Activated CD4-positive, alpha-beta T cell treated with anti-CD3 and anti-CD28 coated beads for 36 hours (primary cell): ENCODE measurements at regions of chr3 and their contacts with region 1.

Region 1: DNA sequence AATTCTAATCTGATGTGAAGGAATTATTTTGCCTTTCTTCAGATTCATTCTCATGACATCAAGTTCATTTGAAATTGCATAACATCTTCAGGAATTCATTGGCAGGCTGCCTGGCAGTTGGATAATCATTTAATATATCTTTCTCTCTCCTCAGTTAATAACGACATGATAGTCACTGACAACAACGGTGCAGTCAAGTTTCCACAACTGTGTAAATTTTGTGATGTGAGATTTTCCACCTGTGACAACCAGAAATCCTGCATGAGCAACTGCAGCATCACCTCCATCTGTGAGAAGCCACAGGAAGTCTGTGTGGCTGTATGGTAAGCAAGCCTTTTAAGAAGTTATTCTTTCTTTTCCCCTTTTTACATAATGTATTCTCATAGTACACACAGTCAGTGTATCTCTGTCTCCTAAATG is 38.2 kb downstream of the TGFBR2 start:
- DNase-seq: peak; percentile 74
- ATAC-seq: peak; percentile 62
- H3K4me3 Mint-ChIP-seq: peak overlapping the region; percentile 58
- H3K27ac Mint-ChIP-seq: peak overlapping the region; percentile 94
- H3K4me1 Mint-ChIP-seq: peaks cover 94% of the 10 kb centered on the region
- H3K27me3 Mint-ChIP-seq: no peaks in the 10 kb centered on the region

Region 2: DNA sequence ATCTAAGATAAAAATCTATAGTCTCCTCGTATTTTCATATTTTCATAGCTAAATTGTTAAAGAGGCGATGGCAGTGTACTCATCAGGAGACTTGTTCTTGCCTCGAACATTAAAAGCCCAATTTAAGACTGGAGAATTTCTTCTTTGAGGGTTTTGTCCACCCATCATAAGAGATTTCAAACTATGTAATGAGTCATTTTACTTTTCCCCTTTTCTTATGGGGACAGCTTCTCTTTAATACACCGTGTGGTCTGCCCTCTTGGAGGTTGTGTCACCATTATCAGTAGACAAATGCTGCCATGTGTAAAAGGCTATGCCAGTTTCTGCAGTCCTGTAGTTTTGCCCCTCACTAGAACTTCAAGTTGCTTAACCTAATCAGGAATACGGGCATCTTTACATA is 21.3 kb before region 1 on chr3:
- CTCF ChIA-PET with region 1: interaction called, 8 read pairs
- POLR2A ChIA-PET with region 1: no interaction called
- intact Hi-C with region 1: loop called (anchors 1 kb)
- DNase-seq: no peak
- ATAC-seq: peak; percentile 20
- H3K4me3 Mint-ChIP-seq: peak overlapping the region; percentile 17
- H3K27ac Mint-ChIP-seq: peak overlapping the region; percentile 83
- H3K4me1 Mint-ChIP-seq: peaks cover 96% of the 10 kb centered on the region
- H3K27me3 Mint-ChIP-seq: no peaks in the 10 kb centered on the region

Region 3: GRCh38 chr3:30628901-30629590 is 15.6 kb before region 1 on chr3:
- CTCF ChIA-PET with region 1: interaction called, 8 read pairs
- POLR2A ChIA-PET with region 1: interaction called, 4 read pairs
- intact Hi-C with region 1: loop called (anchors 1 kb)
- DNase-seq: no peak
- ATAC-seq: no peak
- H3K4me3 Mint-ChIP-seq: peak overlapping the region; percentile 61
- H3K27ac Mint-ChIP-seq: peak overlapping the region; percentile 97
- H3K4me1 Mint-ChIP-seq: peaks cover 96% of the 10 kb centered on the region
- H3K27me3 Mint-ChIP-seq: no peaks in the 10 kb centered on the region